Activated naive CD4-positive, alpha-beta T cell treated with anti-CD3 and anti-CD28 coated beads for 36 hours (primary cell): ENCODE measurements at regions of chr17 and their contacts with region 1.

Region 1: GRCh38 chr17:34542700-34543336 is 36.6 kb upstream of the TMEM132E start:
- DNase-seq: peak; percentile 68
- H3K4me3 Mint-ChIP-seq: no peak overlapping the region
- H3K27ac Mint-ChIP-seq: no peak overlapping the region
- H3K4me1 Mint-ChIP-seq: no peaks in the 10 kb centered on the region
- H3K27me3 Mint-ChIP-seq: peaks cover 29% of the 10 kb centered on the region

Region 2: GRCh38 chr17:34556384-34556783 is 13.6 kb after region 1 on chr17:
- CTCF ChIA-PET with region 1: interaction called, 10 read pairs
- intact Hi-C with region 1: no loop called
- DNase-seq: no peak
- H3K4me3 Mint-ChIP-seq: no peak overlapping the region
- H3K27ac Mint-ChIP-seq: no peak overlapping the region
- H3K4me1 Mint-ChIP-seq: no peaks in the 10 kb centered on the region
- H3K27me3 Mint-ChIP-seq: peaks cover 14% of the 10 kb centered on the region

Region 3: GRCh38 chr17:34892461-34893249 is 349.8 kb after region 1 on chr17:
- CTCF ChIA-PET with region 1: interaction called, 4 read pairs
- intact Hi-C with region 1: loop called (anchors 2 kb)
- DNase-seq: peak; percentile 9
- H3K4me3 Mint-ChIP-seq: no peak overlapping the region
- H3K27ac Mint-ChIP-seq: no peak overlapping the region
- H3K4me1 Mint-ChIP-seq: no peaks in the 10 kb centered on the region
- H3K27me3 Mint-ChIP-seq: peaks cover 10% of the 10 kb centered on the region